ENCODE measurements at regions of chr14 and their contacts with region 1.

Region 1: GRCh38 chr14:35404449-35405303 is at the start of gene NFKBIA:
- DNase-seq: peak; percentile 98
- ATAC-seq: peak; percentile 69
- H3K4me3 ChIP-seq: peak within 1 kb of the TSS; percentile 74 to 99 (median 97)
- H3K4me3 Mint-ChIP-seq: peak within 1 kb of the TSS; percentile 95
- H3K27ac ChIP-seq: peak within 1 kb of the TSS; percentile 96 to 98
- H3K27ac Mint-ChIP-seq: peak within 1 kb of the TSS; percentile 99
- H3K4me1 ChIP-seq: peaks cover 49 to 53% of the 10 kb centered on the region in 2 donors
- H3K4me1 Mint-ChIP-seq: peaks cover 60% of the 10 kb centered on the region
- H3K27me3 ChIP-seq: no peaks in the 10 kb centered on the region
- H3K27me3 Mint-ChIP-seq: no peaks in the 10 kb centered on the region
- CTCF ChIP-seq: peak; percentile 12
- total RNA-seq, gene NFKBIA: 287 and 308 TPM in 2 replicates

Region 2: DNA sequence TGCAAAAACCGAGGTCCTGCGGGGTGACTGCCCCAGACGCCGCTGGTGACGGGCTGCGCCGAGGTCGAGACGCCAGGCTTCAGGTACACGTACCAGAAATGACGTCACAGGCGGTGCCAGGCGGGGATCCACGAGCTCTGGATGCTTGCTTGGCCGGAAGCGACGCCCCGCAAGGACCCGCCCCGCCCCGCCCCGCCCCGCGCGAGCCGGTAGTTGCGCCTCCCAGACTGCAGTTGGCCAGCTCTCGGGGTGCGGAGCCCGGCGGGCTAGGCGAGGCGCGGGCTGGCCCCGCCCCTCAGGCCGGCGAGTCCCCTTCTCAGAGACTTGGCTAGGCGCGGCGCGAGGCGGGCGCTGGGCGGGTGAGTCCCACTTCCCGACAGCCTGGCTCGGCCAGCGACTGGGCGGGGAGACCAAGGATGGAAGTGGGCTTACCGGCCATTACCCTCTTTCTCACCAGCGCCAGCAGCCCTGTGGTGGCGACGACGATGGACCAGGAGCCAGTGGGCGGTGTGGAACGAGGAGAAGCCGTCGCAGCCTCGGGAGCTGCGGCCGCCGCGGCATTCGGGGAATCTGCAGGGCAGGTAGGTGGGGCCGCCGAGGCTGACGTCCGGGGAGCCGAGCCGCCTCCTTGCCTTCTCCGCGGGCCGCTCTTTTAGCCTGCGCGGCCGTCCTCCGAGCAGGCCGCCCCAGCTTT is 358.5 kb before region 1 on chr14 and contains the start of gene FAM177A1:
- CTCF ChIA-PET with region 1: no interaction called
- POLR2A ChIA-PET with region 1: interaction called, 8 read pairs
- intact Hi-C with region 1: loop called (anchors 1 kb)
- DNase-seq: peak; percentile 99
- ATAC-seq: peak; percentile 94
- H3K4me3 ChIP-seq: peak within 1 kb of the TSS; percentile 70 to 97 (median 80)
- H3K4me3 Mint-ChIP-seq: peak within 1 kb of the TSS; percentile 87
- H3K27ac ChIP-seq: peak within 1 kb of the TSS; percentile 94 to 96
- H3K27ac Mint-ChIP-seq: peak within 1 kb of the TSS; percentile 95
- H3K4me1 ChIP-seq: peaks cover 11 to 15% of the 10 kb centered on the region in 2 donors
- H3K4me1 Mint-ChIP-seq: peaks cover 26% of the 10 kb centered on the region
- H3K27me3 ChIP-seq: no peaks in the 10 kb centered on the region
- H3K27me3 Mint-ChIP-seq: no peaks in the 10 kb centered on the region
- CTCF ChIP-seq: no peak
- total RNA-seq, gene FAM177A1: 32.1 and 39.4 TPM in 2 replicates

Region 3: GRCh38 chr14:35215110-35215876 is 189.4 kb before region 1 on chr14:
- CTCF ChIA-PET with region 1: interaction called, 24 read pairs
- POLR2A ChIA-PET with region 1: interaction called, 3 read pairs
- intact Hi-C with region 1: no loop called
- DNase-seq: peak; percentile 30
- ATAC-seq: no peak
- H3K4me3 ChIP-seq: no peak overlapping the region
- H3K4me3 Mint-ChIP-seq: no peak overlapping the region
- H3K27ac ChIP-seq: no peak overlapping the region
- H3K27ac Mint-ChIP-seq: no peak overlapping the region
- H3K4me1 ChIP-seq: no peaks in the 10 kb centered on the region
- H3K4me1 Mint-ChIP-seq: no peaks in the 10 kb centered on the region
- H3K27me3 ChIP-seq: no peaks in the 10 kb centered on the region
- H3K27me3 Mint-ChIP-seq: no peaks in the 10 kb centered on the region
- CTCF ChIP-seq: peak; percentile 12

Region 4: GRCh38 chr14:35285168-35286002 is 119.3 kb before region 1 on chr14:
- CTCF ChIA-PET with region 1: interaction called, 30 read pairs
- POLR2A ChIA-PET with region 1: interaction called, 59 read pairs
- intact Hi-C with region 1: loop called (anchors 1 kb)
- DNase-seq: peak; percentile 82
- ATAC-seq: peak; percentile 83
- H3K4me3 ChIP-seq: peak overlapping the region; percentile 10 to 41 (median 39)
- H3K4me3 Mint-ChIP-seq: peak overlapping the region; percentile 61
- H3K27ac ChIP-seq: peak overlapping the region; percentile 70 to 71
- H3K27ac Mint-ChIP-seq: peak overlapping the region; percentile 72
- H3K4me1 ChIP-seq: peaks cover 38% of the 10 kb centered on the region in 2 donors
- H3K4me1 Mint-ChIP-seq: peaks cover 39% of the 10 kb centered on the region
- H3K27me3 ChIP-seq: no peaks in the 10 kb centered on the region
- H3K27me3 Mint-ChIP-seq: peaks cover 5% of the 10 kb centered on the region
- CTCF ChIP-seq: no peak

Region 5: DNA sequence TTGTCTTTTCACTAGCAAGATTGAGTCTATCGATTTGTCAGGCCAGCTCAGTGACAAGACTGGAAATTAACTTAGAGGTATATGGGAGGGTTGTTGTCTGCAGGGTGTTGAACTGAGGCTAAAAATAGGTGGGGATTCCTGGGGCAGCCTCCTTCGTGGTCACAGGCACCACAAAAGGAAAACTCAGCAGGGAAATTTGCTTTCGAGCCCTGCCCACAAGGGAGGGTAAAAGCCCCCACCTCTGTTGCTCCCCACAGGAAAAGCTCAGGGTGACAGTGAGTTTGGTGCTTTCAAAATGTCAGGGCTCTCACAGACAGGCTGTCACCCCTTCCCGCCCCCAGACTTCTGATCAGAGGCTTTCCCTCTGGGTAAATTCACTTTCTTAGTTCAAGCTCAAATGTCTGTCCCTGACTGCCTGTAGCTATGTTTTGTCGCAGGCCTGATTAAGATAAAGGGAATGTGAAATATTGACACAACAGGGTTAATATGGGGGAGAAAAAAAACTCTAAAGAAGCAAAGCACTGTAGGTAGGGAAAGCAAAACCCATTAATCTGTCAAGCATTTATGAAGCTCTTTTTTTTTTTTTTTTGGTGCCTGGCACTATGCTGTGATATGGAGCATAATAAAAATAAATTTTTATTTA is 11.6 kb after region 1 on chr14:
- CTCF ChIA-PET with region 1: interaction called, 19 read pairs
- POLR2A ChIA-PET with region 1: interaction called, 10 read pairs
- intact Hi-C with region 1: loop called (anchors 1 kb)
- DNase-seq: peak; percentile 39
- ATAC-seq: peak; percentile 32
- H3K4me3 ChIP-seq: no peak overlapping the region
- H3K4me3 Mint-ChIP-seq: peak overlapping the region; percentile 44
- H3K27ac ChIP-seq: no peak overlapping the region
- H3K27ac Mint-ChIP-seq: peak overlapping the region; percentile 15
- H3K4me1 ChIP-seq: peaks cover 8 to 26% of the 10 kb centered on the region in 2 donors
- H3K4me1 Mint-ChIP-seq: peaks cover 25% of the 10 kb centered on the region
- H3K27me3 ChIP-seq: no peaks in the 10 kb centered on the region
- H3K27me3 Mint-ChIP-seq: no peaks in the 10 kb centered on the region
- CTCF ChIP-seq: no peak

Region 6: GRCh38 chr14:35533357-35534207 is 128.9 kb after region 1 on chr14 and contains the start of gene INSM2:
- CTCF ChIA-PET with region 1: no interaction called
- POLR2A ChIA-PET with region 1: no interaction called
- intact Hi-C with region 1: no loop called
- DNase-seq: peak; percentile 57
- ATAC-seq: peak; percentile 65
- H3K4me3 ChIP-seq: peak within 1 kb of the TSS in 4 of 5 experiments; percentile 43 to 67 (median 62)
- H3K4me3 Mint-ChIP-seq: peak within 1 kb of the TSS; percentile 87
- H3K27ac ChIP-seq: no peak within 1 kb of the TSS
- H3K27ac Mint-ChIP-seq: no peak within 1 kb of the TSS
- H3K4me1 ChIP-seq: peaks cover 21 to 23% of the 10 kb centered on the region in 2 donors
- H3K4me1 Mint-ChIP-seq: peaks cover 18% of the 10 kb centered on the region
- H3K27me3 ChIP-seq: peaks cover 3 to 35% (median 34%) of the 10 kb centered on the region in 4 experiments
- H3K27me3 Mint-ChIP-seq: peaks cover 57% of the 10 kb centered on the region
- CTCF ChIP-seq: no peak
- total RNA-seq, gene INSM2: not detected in 2 replicates

Measured in B cell (primary cell).